Left ventricle myocardium superior (tissue), 1 donor: ENCODE measurements at regions of chr10 and their contacts with region 1.

Region 1: DNA sequence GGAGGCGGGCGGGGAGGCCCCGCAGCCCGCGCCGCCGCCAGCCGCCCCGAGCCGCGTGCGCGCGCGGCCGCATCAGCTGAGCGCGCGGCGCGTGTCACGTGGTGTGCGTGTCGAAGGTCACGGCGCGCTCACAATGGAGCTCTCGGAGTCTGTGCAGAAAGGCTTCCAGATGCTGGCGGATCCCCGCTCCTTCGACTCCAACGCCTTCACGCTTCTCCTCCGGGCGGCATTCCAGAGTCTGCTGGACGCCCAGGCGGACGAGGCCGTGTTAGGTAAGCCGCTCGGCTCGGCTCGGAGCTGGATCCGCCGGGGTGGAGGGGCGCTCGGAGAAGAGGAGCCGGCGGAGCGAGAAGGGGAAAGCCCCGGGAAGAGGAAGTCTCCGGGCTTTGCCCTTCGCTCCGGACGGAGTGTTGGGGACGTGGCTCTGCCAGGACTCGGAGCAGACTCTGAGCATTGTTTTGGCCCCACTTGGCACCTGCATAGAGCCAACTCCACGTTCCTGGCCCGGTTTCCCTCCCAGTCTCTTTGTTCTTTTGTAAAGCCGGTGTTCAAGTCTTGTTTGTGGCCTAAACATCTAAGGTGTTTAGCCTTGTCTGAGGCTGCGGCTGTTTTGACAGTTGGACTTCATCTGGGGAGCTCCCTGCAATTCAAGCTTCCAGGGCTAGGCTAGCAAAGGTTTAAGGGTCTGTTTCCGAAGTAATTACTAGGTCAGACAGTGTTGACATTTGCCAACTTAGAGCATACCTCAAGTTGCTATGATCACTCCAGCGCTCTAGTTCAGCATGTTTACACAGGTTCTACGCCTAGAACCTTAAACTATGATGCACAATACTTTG is at the start of gene COMMD3:
- DNase-seq: peak; percentile 94
- ATAC-seq: peak; percentile 91
- total RNA-seq, gene COMMD3: 83.5 TPM

Region 2: GRCh38 chr10:22228943-22229801 is 87.3 kb before region 1 on chr10:
- intact Hi-C with region 1: loop called (anchors 10 kb)
- DNase-seq: peak; percentile 88
- ATAC-seq: peak; percentile 99

Region 3: GRCh38 chr10:22251751-22252223 is 64.7 kb before region 1 on chr10:
- intact Hi-C with region 1: loop called (anchors 5 kb)
- DNase-seq: peak; percentile 78
- ATAC-seq: peak; percentile 66